Aorta (tissue), 5 donors: ENCODE measurements at regions of chr10 and their contacts with region 1.

Region 1: DNA sequence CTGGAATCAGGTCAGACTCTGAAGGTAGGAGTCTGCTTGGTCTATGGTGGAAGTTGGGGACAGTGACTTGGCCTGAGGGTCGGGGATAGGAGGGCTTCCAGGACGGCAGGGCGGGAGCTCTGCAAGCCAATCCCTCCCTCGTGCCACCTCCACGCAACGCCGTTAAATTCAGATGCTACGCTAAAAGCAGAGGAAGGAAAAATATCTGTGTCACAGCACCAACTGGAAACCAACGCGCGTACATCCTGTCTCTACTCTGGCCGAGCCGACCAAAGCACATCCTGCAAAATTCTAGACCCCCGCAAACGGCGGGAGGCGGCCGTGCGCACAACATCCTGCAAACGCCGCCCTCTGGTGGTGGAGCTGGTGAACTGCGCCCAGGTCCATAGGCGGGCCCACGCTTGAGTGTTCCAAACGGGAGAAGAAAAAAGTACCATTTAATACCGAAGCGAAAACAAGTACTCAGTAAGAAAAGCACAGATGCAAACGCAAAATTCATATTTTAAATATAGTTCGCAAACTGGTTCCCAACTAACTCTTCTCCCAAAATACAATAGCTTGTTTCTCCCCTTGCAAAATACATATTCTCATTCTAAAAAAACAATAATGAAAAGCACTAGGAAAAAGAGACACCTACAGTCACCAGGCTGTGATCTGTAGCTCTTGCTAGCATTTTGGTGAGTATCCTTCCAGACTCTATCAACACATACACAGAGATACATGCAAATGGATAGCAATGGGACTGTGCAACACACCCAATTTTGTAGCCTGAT is 45.7 kb upstream of the HSPA12A start:
- DNase-seq: peak; percentile 83 to 93
- ATAC-seq: peak; percentile 90
- H3K4me3 ChIP-seq: no peak overlapping the region
- H3K27ac ChIP-seq: no peak overlapping the region
- H3K4me1 ChIP-seq: no peaks in the 10 kb centered on the region
- H3K27me3 ChIP-seq: no peaks in the 10 kb centered on the region

Region 2: GRCh38 chr10:116683821-116684220 is 104.3 kb before region 1 on chr10:
- intact Hi-C with region 1: loop called (anchors 1 to 2 kb)
- DNase-seq: no peak
- ATAC-seq: no peak
- H3K4me3 ChIP-seq: no peak overlapping the region
- H3K27ac ChIP-seq: no peak overlapping the region
- H3K4me1 ChIP-seq: no peaks in the 10 kb centered on the region
- H3K27me3 ChIP-seq: no peaks in the 10 kb centered on the region

Region 3: DNA sequence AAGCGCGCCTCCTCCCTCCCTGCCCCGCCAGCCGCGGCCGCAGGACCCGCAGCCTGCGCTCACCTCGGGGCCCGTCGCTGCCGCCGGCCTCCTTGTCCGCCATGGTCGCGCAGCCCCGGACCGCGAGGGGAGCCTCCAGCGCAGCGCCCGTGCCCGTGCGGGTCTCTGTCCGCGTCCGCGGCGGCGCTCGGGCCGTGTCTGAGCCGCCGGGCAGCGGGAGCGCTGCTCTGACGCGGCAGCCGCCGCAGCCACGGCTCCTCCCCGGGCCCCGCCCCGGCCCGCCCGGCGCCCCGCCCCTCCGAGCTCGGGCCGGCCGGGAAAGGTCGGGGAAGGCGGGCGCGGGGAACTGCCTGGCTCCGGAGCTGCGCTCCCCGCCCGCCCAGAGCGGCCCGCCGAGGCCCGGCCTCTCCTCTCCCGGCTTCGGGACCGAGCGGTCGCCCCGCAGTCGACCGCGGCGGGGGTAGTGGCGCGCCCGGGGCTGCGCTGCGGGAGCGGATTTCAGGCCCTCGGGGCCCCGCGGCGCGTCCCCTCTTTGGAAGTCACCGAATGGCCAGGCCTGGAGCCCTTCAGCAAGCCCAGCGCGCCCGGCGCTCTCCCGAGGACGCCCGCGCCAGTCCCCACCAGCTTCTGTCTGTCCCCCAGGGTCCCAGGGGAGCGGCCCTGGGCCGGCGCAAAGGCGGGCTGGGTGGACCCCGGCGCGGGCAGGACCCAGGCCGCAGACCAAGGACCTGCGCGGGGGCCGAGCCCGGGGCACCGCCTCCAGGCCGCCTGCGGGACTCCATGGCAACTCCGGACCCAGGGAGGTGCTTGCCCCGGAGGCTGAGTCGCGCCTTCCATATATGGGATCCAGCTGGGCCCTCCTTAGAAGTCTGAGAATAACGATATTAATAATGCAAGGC is 45.5 kb before region 1 on chr10 and contains the start of gene HSPA12A:
- intact Hi-C with region 1: loop called in 1 of 2 experiments (anchors 5 kb)
- DNase-seq: peak; percentile 91 to 94
- ATAC-seq: peak; percentile 93
- H3K4me3 ChIP-seq: peak within 1 kb of the TSS; percentile 77 to 90
- H3K27ac ChIP-seq: peak within 1 kb of the TSS; percentile 95 to 98
- H3K4me1 ChIP-seq: no peaks in the 10 kb centered on the region
- H3K27me3 ChIP-seq: no peaks in the 10 kb centered on the region
- total RNA-seq, gene HSPA12A: 15.3 to 25.7 TPM

Region 4: GRCh38 chr10:117174439-117175214 is 386.5 kb after region 1 on chr10:
- intact Hi-C with region 1: loop called in 1 of 2 experiments (anchors 2 kb)
- DNase-seq: peak; percentile 80 to 89
- ATAC-seq: peak; percentile 89
- H3K4me3 ChIP-seq: peak overlapping the region in 1 of 2 donors; percentile 9
- H3K27ac ChIP-seq: no peak overlapping the region
- H3K4me1 ChIP-seq: no peaks in the 10 kb centered on the region
- H3K27me3 ChIP-seq: no peaks in the 10 kb centered on the region